HCT116 (cell line): ENCODE measurements at regions of chr2 and their contacts with region 1.

Region 1: DNA sequence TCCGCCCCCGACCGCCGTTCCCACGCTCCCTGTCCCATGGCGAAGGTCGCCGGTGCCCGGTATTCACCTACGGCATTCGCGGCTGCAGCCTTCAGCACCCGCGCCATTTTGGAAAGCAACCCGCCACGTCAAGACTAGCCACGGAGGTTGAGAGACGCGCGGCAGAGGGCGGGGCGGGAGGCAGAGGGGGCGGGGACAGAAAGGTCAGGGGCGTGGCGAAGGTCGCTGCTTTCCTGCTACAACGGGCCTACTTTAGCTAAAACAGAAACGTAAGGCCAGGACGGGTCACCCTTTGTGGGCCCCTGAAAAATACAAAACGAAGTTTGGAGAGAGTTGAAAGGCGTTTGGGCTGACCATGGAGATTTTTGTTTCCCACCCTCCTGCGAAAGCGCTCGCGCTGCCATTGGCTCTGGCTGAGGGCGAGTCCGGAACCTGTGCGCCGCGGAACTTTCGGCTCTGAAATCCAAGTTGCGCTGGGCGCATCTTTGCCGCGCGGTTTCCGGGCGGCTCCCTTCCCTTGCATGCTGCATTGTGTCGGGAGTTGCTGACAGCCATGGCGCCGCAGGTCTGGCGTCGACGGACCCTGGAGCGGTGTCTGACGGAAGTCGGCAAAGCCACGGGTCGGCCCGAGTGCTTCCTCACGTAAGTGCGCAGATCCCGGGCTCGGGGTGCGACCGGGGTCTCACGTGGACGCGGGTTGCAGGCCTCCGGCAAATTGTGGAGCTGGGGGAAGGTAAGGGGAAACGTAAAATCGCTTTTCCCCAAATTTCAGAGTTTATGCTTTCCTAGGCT is at the starts of genes MCEE and MPHOSPH10:
- DNase-seq: peak; percentile 78
- ATAC-seq: peak; percentile 94
- H3K4me3 ChIP-seq: peak within 1 kb of the TSS; percentile 83 to 97
- H3K27ac ChIP-seq: peak within 1 kb of the TSS; percentile 72
- H3K4me1 ChIP-seq: peaks cover 0 to 21% of the 10 kb centered on the region in 2 experiments; a peak in 2 of 4 replicates
- H3K27me3 ChIP-seq: no peaks in the 10 kb centered on the region
- CTCF ChIP-seq: no peak
- POLR2A ChIP-seq: peak; percentile 67
- RAD21 ChIP-seq: no peak
- total RNA-seq, gene MCEE: 9.0 TPM
- total RNA-seq, gene MPHOSPH10: 36.7 TPM

Region 2: DNA sequence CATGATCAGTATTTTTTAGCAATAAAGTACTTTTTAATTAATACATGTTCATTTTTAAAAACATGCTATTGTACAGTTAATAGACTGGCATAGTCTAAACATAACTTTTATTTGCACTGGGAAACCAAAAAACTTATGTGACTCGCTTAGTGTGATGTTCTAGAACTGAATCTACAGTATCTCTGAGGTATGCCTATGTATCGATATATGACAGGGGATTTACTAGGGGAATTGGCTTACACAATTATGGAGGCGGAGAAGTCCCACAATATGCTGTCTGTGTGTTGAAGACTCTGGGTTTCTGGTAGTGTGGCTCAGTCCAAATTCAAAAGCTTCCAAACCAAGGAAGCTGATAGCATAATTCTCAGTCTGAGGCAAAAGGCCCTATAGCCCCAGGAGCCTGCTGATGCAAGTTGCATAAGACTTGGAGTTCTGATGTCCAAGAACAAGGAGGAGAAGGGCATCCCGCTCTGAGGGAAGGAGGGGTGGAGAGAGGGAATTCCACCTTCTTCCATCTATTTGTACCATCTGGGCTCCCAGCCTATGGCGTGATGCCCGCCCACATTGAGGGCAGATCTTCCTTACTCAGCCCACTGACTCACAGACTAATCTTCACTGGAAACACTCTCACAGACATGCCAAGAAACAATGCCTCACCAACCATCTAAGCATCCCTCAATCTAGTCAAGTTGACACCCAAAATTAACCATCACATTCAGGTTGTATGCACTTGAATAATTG is 228.8 kb after region 1 on chr2:
- CTCF ChIA-PET with region 1: no interaction called
- POLR2A ChIA-PET with region 1: no interaction called
- RAD21 ChIA-PET with region 1: no interaction called
- intact Hi-C with region 1: loop called (anchors 10 kb)
- DNase-seq: no peak
- ATAC-seq: no peak
- H3K4me3 ChIP-seq: no peak overlapping the region
- H3K27ac ChIP-seq: no peak overlapping the region
- H3K4me1 ChIP-seq: no peaks in the 10 kb centered on the region
- H3K27me3 ChIP-seq: no peaks in the 10 kb centered on the region
- CTCF ChIP-seq: no peak
- POLR2A ChIP-seq: no peak
- RAD21 ChIP-seq: no peak